ENCODE measurements at regions of chr5 and their contacts with region 1.

Region 1: GRCh38 chr5:27472000-27472763 is 433.8 kb upstream of the CDH9 start:
- DNase-seq: no peak
- ATAC-seq: peak; percentile 67
- H3K4me3 ChIP-seq: peak overlapping the region; percentile 6 to 36
- H3K27ac ChIP-seq: no peak overlapping the region
- H3K4me1 ChIP-seq: no peaks in the 10 kb centered on the region
- H3K27me3 ChIP-seq: no peaks in the 10 kb centered on the region
- CTCF ChIP-seq: no peak
- POLR2A ChIP-seq: no peak
- RAD21 ChIP-seq: no peak

Region 2: GRCh38 chr5:27458287-27458686 is 13.9 kb before region 1 on chr5:
- CTCF ChIA-PET with region 1: no interaction called
- POLR2A ChIA-PET with region 1: no interaction called
- RAD21 ChIA-PET with region 1: no interaction called
- intact Hi-C with region 1: loop called (anchors 1 kb)
- DNase-seq: no peak
- ATAC-seq: no peak
- H3K4me3 ChIP-seq: no peak overlapping the region
- H3K27ac ChIP-seq: no peak overlapping the region
- H3K4me1 ChIP-seq: no peaks in the 10 kb centered on the region
- H3K27me3 ChIP-seq: no peaks in the 10 kb centered on the region
- CTCF ChIP-seq: no peak
- POLR2A ChIP-seq: no peak
- RAD21 ChIP-seq: no peak

Measured in HCT116 (cell line).